ENCODE measurements at regions of chr10 and their contacts with region 1.

Region 1: GRCh38 chr10:5873515-5873995 is 16.1 kb downstream of the ANKRD16 start:
- DNase-seq: peak; percentile 45 to 77 (median 66)
- ATAC-seq: peak; percentile 99
- H3K4me3 ChIP-seq: no peak overlapping the region
- H3K4me3 Mint-ChIP-seq: peak overlapping the region; percentile 50
- H3K27ac ChIP-seq: no peak overlapping the region
- H3K27ac Mint-ChIP-seq: no peak overlapping the region
- H3K4me1 ChIP-seq: no peaks in the 10 kb centered on the region
- H3K4me1 Mint-ChIP-seq: peaks cover 2% of the 10 kb centered on the region
- H3K27me3 ChIP-seq: no peaks in the 10 kb centered on the region
- H3K27me3 Mint-ChIP-seq: no peaks in the 10 kb centered on the region
- CTCF ChIP-seq: peak; percentile 68

Region 2: DNA sequence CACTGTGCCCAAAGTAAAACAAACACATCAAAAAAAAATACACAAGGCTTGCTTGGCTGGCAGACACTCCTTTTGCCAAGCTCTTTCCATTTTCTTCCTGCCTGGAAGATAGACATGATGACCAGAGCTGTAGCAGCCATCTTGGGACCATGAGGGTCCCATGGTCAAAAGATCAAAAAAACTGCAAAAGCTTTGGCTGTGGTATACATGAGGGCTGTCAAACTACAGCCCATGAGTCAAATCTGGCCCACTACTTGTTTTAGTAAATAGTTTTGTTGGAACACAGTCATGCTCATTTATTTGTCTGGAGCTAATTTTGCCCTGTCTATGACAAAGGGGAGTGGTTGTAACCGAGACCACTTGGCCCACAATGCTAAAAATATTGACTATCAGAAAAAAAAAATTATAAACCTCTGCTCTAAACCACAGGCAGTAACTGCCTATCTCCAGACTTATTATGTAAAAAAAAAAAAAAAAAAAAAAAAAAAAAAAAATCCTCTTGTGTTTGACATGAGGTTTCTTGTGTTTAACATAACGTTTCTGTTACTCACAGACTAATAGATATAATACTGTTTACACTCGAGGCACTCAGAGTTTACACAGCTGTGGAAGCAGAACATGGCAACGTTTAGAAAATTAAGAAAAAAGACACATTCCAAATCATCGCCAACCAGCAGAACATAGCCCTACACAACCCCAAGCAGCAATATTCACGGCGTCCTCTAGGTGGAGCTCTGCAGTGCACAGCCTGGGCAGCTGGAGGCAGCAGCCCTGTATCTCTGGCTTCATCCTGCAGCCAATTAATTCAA is 244.0 kb before region 1 on chr10:
- CTCF ChIA-PET with region 1: interaction called, 20 read pairs
- POLR2A ChIA-PET with region 1: no interaction called
- intact Hi-C with region 1: loop called in 1 of 2 experiments (anchors 1 kb)
- DNase-seq: peak; percentile 68 to 89 (median 82)
- ATAC-seq: peak; percentile 99
- H3K4me3 ChIP-seq: no peak overlapping the region
- H3K4me3 Mint-ChIP-seq: no peak overlapping the region
- H3K27ac ChIP-seq: no peak overlapping the region
- H3K27ac Mint-ChIP-seq: no peak overlapping the region
- H3K4me1 ChIP-seq: no peaks in the 10 kb centered on the region
- H3K4me1 Mint-ChIP-seq: peaks cover 10% of the 10 kb centered on the region
- H3K27me3 ChIP-seq: no peaks in the 10 kb centered on the region
- H3K27me3 Mint-ChIP-seq: peaks cover 4% of the 10 kb centered on the region
- CTCF ChIP-seq: peak; percentile 90

Region 3: DNA sequence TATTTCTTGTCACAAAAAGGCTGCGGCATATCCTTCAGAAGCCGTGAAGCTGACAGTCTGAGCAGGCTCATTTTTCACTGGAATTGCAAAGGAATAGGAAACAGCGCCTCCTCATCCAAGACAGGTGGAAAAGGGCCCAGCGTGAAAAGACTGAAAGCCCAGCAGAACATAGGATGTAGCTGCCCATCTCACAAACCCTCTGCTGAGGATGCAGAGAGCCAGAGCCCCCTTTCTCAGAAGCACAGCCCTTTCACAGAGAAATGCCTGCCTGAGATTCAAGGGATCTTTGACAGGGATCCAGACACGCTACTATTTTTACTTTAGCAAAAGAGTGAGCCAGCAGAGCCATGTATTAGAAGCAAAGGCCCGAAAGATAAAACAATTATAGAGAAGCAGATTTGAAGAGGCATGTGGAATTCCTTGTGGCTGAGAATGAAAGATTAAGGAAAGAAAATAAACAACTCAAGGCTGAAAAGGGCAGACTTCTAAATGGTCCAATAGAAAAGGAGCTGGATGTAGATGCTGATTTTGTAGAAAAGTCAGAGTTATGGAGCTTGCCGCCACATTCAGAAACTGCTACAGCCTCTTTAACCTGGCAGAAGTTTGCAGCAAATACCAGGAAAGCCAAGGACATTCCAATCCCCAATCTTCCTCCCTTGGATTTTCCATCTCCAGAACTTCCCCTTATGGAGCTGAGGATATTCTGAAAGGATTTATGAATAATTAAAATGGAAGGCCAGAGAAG is 97.2 kb before region 1 on chr10:
- CTCF ChIA-PET with region 1: interaction called, 3 read pairs
- POLR2A ChIA-PET with region 1: no interaction called
- intact Hi-C with region 1: loop called in 1 of 2 experiments (anchors 5 kb)
- DNase-seq: no peak
- ATAC-seq: no peak
- H3K4me3 ChIP-seq: peak overlapping the region in 1 of 2 experiments; percentile 24
- H3K4me3 Mint-ChIP-seq: peak overlapping the region; percentile 73
- H3K27ac ChIP-seq: peak overlapping the region; percentile 54 to 56
- H3K27ac Mint-ChIP-seq: peak overlapping the region; percentile 97
- H3K4me1 ChIP-seq: peaks cover 18% of the 10 kb centered on the region
- H3K4me1 Mint-ChIP-seq: peaks cover 66% of the 10 kb centered on the region
- H3K27me3 ChIP-seq: no peaks in the 10 kb centered on the region
- H3K27me3 Mint-ChIP-seq: no peaks in the 10 kb centered on the region
- CTCF ChIP-seq: no peak

Region 4: DNA sequence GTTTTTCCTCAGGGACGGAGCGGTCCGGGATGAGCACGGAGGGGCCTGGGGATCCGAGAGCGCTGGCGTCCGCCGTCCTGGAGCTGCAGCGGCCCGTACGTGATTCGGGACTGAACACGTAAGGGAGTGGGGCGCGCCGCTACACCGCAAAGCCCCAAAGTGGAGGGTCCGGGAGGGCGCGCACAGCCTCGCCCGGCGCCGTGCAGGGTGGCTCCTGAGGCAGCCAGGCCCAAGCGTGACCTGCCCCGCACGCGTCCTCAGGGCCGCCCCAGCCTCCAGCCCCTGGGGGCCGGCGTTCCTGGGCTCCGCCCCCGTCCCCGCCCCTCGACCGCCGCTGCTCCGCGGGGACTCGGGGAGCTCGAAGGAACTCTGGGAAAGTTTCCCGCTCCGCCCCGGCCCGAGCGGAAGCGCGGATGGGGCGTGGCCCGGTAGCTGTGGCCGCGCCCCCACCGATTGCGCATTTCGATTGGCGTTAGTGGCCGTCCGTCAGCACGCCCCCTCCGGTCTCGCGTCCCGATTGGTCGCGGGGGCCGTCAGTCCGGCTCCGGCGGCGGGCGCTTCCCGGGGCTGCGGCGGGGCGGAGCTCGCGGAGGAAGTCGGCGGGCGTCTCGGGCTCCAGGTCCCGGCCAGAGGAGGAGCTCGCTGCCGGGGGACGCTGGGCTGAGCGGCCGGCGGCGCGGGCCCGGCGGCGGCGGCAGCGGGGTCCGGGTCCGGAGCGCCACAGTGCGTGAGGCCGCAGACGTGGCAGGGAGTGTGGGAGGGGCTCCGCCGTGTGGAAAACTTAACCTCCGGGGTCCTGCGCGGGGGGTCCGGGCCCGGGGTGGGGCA is 16.3 kb after region 1 on chr10 and contains the starts of genes ANKRD16 and FBH1:
- CTCF ChIA-PET with region 1: interaction called, 15 read pairs
- POLR2A ChIA-PET with region 1: interaction called, 4 read pairs
- intact Hi-C with region 1: loop called in 1 of 2 experiments (anchors 1 kb)
- DNase-seq: peak; percentile 93 to 99 (median 97)
- ATAC-seq: peak; percentile 89
- H3K4me3 ChIP-seq: peak within 1 kb of the TSS; percentile 79 to 88
- H3K4me3 Mint-ChIP-seq: peak within 1 kb of the TSS; percentile 90
- H3K27ac ChIP-seq: peak within 1 kb of the TSS; percentile 47 to 63
- H3K27ac Mint-ChIP-seq: peak within 1 kb of the TSS; percentile 81
- H3K4me1 ChIP-seq: peaks cover 19% of the 10 kb centered on the region
- H3K4me1 Mint-ChIP-seq: peaks cover 50% of the 10 kb centered on the region
- H3K27me3 ChIP-seq: no peaks in the 10 kb centered on the region
- H3K27me3 Mint-ChIP-seq: no peaks in the 10 kb centered on the region
- CTCF ChIP-seq: no peak
- total RNA-seq, gene ANKRD16: 1.7 to 2.1 TPM
- total RNA-seq, gene FBH1: 23.5 to 24.8 TPM

Region 5: DNA sequence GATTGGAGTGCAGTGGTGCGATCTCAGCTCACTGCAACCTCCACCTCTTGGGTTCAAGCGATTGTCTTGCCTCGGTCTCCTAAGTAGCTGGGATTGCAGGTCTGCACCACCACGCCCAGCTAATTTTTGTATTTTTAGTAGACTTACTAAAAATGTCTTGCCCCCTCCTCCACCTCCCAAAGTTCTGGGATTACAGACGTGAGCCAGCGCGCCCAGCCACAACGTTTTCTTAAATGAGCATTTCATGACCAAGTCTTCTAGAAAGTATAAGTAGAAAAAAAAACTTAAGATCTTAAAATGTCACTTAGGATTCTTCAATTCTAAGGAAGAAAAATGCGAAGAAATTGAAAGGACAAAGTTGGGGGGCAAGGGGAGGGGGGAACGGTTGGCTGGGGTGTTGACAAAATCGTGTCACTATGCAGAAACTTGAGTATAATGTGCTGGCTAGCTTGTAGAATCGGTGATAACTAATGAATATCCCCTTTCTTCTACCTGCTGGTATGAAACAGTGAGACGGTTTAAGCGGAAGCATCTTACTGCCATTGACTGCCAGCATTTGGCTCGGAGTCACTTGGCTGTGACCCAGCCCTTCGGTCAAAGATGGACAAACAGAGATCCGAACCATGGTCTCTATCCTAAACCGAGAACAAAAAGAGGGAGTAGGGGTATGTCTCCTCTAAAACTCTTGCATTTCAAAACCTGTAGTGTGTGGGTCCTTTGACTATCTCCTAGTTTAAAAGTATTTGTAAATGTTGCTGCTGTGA is 29.1 kb after region 1 on chr10:
- CTCF ChIA-PET with region 1: no interaction called
- POLR2A ChIA-PET with region 1: no interaction called
- intact Hi-C with region 1: no loop called
- DNase-seq: no peak
- ATAC-seq: no peak
- H3K4me3 ChIP-seq: no peak overlapping the region
- H3K4me3 Mint-ChIP-seq: no peak overlapping the region
- H3K27ac ChIP-seq: no peak overlapping the region
- H3K27ac Mint-ChIP-seq: no peak overlapping the region
- H3K4me1 ChIP-seq: no peaks in the 10 kb centered on the region
- H3K4me1 Mint-ChIP-seq: peaks cover 26% of the 10 kb centered on the region
- H3K27me3 ChIP-seq: no peaks in the 10 kb centered on the region
- H3K27me3 Mint-ChIP-seq: no peaks in the 10 kb centered on the region
- CTCF ChIP-seq: no peak

Region 6: GRCh38 chr10:6843481-6843881 is 969.9 kb after region 1 on chr10:
- CTCF ChIA-PET with region 1: no interaction called
- POLR2A ChIA-PET with region 1: no interaction called
- intact Hi-C with region 1: no loop called
- DNase-seq: peak in 2 of 9 experiments; percentile 29 to 33
- ATAC-seq: no peak
- H3K4me3 ChIP-seq: no peak overlapping the region
- H3K4me3 Mint-ChIP-seq: no peak overlapping the region
- H3K27ac ChIP-seq: no peak overlapping the region
- H3K27ac Mint-ChIP-seq: no peak overlapping the region
- H3K4me1 ChIP-seq: no peaks in the 10 kb centered on the region
- H3K4me1 Mint-ChIP-seq: no peaks in the 10 kb centered on the region
- H3K27me3 ChIP-seq: no peaks in the 10 kb centered on the region
- H3K27me3 Mint-ChIP-seq: peaks cover 4% of the 10 kb centered on the region
- CTCF ChIP-seq: no peak